ENCODE measurements at regions of chr19 and their contacts with region 1.

Region 1: GRCh38 chr19:54231077-54231931 is 8.5 kb upstream of the LILRB3 start:
- DNase-seq: peak; percentile 92
- ATAC-seq: peak; percentile 97
- H3K4me3 ChIP-seq: no peak overlapping the region
- H3K27ac ChIP-seq: no peak overlapping the region
- H3K4me1 ChIP-seq: no peaks in the 10 kb centered on the region
- H3K27me3 ChIP-seq: no peaks in the 10 kb centered on the region
- CTCF ChIP-seq: peak; percentile 95

Region 2: DNA sequence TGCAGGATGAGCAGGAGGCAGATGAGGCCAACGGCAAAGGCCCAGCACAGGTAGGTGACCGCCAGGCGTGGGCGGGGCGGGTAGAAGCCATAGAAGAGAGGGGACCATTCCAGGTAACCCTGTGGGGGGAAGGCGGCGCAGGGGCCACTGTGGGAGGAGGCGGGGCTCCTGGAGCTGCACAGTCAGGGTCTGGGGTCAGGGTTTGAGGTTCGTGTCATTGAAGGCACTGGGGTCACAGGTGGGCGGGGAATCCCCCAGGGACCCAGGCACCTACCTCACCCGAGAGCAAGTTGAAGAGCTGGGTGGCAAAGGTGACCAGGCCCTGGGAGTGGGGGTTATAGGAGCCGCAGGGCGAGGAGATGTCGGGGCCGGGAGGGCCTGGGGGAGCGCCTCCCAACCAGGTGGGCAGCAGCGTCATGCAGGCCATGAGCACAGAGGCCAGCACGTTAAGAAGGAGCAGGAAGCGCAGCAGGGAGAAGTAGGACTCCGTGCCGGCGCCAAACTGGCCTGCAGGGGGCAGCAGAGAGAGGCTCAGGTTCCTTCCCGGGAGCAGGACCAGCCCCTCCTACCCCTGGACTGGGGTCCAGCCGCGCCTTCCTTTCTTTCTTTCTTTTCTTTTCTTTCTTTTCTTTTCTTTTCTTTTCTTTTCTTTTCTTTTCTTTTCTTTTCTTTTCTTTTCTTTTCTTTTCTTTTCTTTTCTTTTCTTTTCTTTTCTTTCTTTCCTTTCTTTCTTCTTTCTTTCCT is 63.0 kb before region 1 on chr19:
- intact Hi-C with region 1: loop called (anchors 5 kb)
- DNase-seq: peak; percentile 94
- ATAC-seq: peak; percentile 82 to 87
- H3K4me3 ChIP-seq: no peak overlapping the region
- H3K27ac ChIP-seq: no peak overlapping the region
- H3K4me1 ChIP-seq: peaks cover 16% of the 10 kb centered on the region
- H3K27me3 ChIP-seq: peaks cover 4% of the 10 kb centered on the region
- CTCF ChIP-seq: peak; percentile 94

Measured in lower lobe of right lung (tissue), 2 donors.